ENCODE measurements at regions of chr2 and their contacts with region 1.

Region 1: GRCh38 chr2:64177315-64177714 is 33.1 kb upstream of the PELI1 start:
- DNase-seq: no peak
- ATAC-seq: no peak
- H3K4me3 ChIP-seq: no peak overlapping the region
- H3K27ac ChIP-seq: no peak overlapping the region
- H3K4me1 ChIP-seq: peaks cover 0 to 4% (median 0%) of the 10 kb centered on the region in 9 donors
- H3K27me3 ChIP-seq: no peaks in the 10 kb centered on the region
- CTCF ChIP-seq: no peak

Region 2: DNA sequence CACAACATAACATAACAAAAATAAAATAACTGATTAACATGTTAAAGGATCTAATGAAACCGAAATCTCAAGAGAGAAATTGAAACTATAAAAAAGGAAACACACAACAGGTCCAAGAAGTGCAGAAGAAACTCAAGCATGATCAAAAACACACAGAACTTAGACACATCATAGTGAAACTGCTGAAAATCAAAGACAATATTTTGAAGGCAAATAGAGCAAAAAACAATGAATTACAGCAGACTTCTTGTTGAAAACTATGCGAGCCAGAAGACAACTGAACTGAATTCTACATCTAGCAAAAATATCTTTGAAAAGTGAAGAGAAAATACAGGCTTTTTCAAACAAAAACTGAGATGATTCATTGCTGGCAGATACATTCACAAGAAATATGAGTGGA is 274.3 kb before region 1 on chr2:
- intact Hi-C with region 1: no loop called
- DNase-seq: no peak
- ATAC-seq: no peak
- H3K4me3 ChIP-seq: no peak overlapping the region
- H3K27ac ChIP-seq: no peak overlapping the region
- H3K4me1 ChIP-seq: peaks cover 0 to 14% (median 0%) of the 10 kb centered on the region in 9 donors
- H3K27me3 ChIP-seq: no peaks in the 10 kb centered on the region
- CTCF ChIP-seq: no peak

Region 3: DNA sequence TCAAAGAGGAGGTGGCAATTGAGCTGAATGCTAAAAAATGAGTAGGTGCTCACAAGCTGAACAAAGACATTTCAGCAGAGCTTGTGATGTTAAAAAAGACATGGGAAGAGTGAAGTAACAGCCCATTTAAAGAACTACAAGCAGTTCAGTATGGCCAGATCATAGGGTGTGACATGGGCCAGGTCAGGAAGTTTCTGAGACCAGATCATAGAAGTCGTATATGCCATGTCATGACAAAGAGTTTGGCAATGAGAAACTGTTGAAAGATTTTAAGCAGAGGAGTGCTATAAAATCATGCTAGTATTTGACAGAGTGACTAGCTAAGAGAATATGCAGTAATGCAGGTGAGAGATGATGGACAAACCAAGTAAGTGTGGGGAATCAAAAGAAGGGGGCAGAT is 25.8 kb before region 1 on chr2:
- intact Hi-C with region 1: loop called in 1 of 10 experiments (anchors 1 kb)
- DNase-seq: no peak
- ATAC-seq: no peak
- H3K4me3 ChIP-seq: no peak overlapping the region
- H3K27ac ChIP-seq: no peak overlapping the region
- H3K4me1 ChIP-seq: peaks cover 0 to 10% (median 0%) of the 10 kb centered on the region in 9 donors
- H3K27me3 ChIP-seq: peaks cover 0 to 4% (median 0%) of the 10 kb centered on the region in 7 donors
- CTCF ChIP-seq: no peak

Measured in heart right ventricle (tissue), 16 donors.